ENCODE measurements at regions of chr2 and their contacts with region 1.

Region 1: GRCh38 chr2:196798980-196799379 is 503 bp downstream of the GTF3C3 start:
- DNase-seq: peak in 3 of 4 experiments; percentile 5 to 9 (median 7)
- ATAC-seq: peak; percentile 47
- H3K4me3 ChIP-seq: peak overlapping the region; percentile 81
- H3K27ac ChIP-seq: peak overlapping the region; percentile 63
- H3K4me1 ChIP-seq: peaks cover 0 to 2% of the 10 kb centered on the region in 2 experiments; a peak in 2 of 5 replicates
- H3K27me3 ChIP-seq: no peaks in the 10 kb centered on the region
- CTCF ChIP-seq: no peak
- EP300 ChIP-seq: no peak
- POLR2A ChIP-seq: no peak
- RAD21 ChIP-seq: no peak

Region 2: GRCh38 chr2:196783431-196784094 is 15.4 kb before region 1 on chr2:
- CTCF ChIA-PET with region 1: no interaction called
- POLR2A ChIA-PET with region 1: interaction called, 13 read pairs
- in situ Hi-C with region 1: no loop called
- intact Hi-C with region 1: no loop called
- DNase-seq: no peak
- ATAC-seq: no peak
- H3K4me3 ChIP-seq: no peak overlapping the region
- H3K27ac ChIP-seq: no peak overlapping the region
- H3K4me1 ChIP-seq: no peaks in the 10 kb centered on the region
- H3K27me3 ChIP-seq: no peaks in the 10 kb centered on the region
- CTCF ChIP-seq: no peak
- EP300 ChIP-seq: no peak
- POLR2A ChIP-seq: no peak
- RAD21 ChIP-seq: no peak

Measured in K562 (cell line).